Activated CD4-positive, alpha-beta memory T cell treated with anti-CD3 and anti-CD28 coated beads, Interleukin-2, amount 10 ng/mL, durations not matched to agents 7 days and 5 days (primary cell): ENCODE measurements at regions of chr11 and their contacts with region 1.

Region 1: DNA sequence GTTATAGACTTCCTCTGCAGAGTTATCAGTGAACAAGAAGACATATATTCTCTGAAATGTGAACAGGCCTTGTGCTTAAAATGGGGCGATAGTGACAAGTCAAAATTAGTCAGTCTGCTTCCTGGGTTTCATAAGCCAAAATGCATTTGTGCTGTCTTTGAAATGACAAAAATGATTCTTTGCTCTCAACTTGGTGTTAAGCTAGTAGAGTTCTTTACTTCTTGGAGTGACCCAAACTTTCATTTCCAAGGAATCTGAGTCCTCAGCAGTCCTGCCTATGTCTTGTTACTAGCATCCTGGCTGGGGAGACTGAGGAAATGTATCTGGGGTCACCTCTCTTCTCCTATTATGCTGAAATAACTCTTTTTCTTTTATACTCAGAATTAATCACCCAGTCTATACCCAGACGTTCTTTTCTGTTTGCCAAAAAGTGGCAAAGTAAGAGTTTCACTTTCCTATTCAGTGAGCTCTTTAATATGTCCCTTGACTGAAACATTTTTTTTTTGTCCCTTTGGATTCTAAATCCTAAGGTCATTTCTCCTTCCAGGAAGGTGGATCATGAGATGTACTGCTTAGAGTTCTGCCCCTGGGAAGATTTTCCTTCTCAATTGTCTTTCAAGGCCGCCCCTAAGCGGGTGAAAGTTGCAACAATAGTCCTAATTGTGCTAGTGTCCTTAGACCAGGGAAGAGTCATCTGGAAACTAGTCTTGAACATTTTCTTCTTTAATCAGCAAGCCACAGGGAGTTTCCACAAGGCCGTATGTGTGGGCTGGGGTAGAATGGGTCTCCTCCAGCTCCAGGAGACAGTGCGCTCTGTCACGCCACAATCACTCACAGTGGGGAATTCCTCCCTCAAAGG is 53.0 kb upstream of the RDX start:
- DNase-seq: peak; percentile 62
- H3K4me3 Mint-ChIP-seq: peak overlapping the region; percentile 51
- H3K27ac Mint-ChIP-seq: peak overlapping the region; percentile 97
- H3K4me1 Mint-ChIP-seq: peaks cover 62% of the 10 kb centered on the region
- H3K27me3 Mint-ChIP-seq: no peaks in the 10 kb centered on the region

Region 2: GRCh38 chr11:110242746-110243145 is 106.6 kb before region 1 on chr11:
- CTCF ChIA-PET with region 1: no interaction called
- POLR2A ChIA-PET with region 1: no interaction called
- DNase-seq: no peak
- H3K4me3 Mint-ChIP-seq: no peak overlapping the region
- H3K27ac Mint-ChIP-seq: no peak overlapping the region
- H3K4me1 Mint-ChIP-seq: peaks cover 4% of the 10 kb centered on the region
- H3K27me3 Mint-ChIP-seq: no peaks in the 10 kb centered on the region

Region 3: GRCh38 chr11:110296226-110297075 is 52.9 kb before region 1 on chr11 and contains the start of gene RDX:
- CTCF ChIA-PET with region 1: no interaction called
- POLR2A ChIA-PET with region 1: interaction called, 11 read pairs
- DNase-seq: peak; percentile 66
- H3K4me3 Mint-ChIP-seq: peak within 1 kb of the TSS; percentile 91
- H3K27ac Mint-ChIP-seq: peak within 1 kb of the TSS; percentile 77
- H3K4me1 Mint-ChIP-seq: peaks cover 45% of the 10 kb centered on the region
- H3K27me3 Mint-ChIP-seq: no peaks in the 10 kb centered on the region
- total RNA-seq, gene RDX: 53.5 to 54.4 TPM

Region 4: GRCh38 chr11:110327508-110327907 is 21.9 kb before region 1 on chr11:
- CTCF ChIA-PET with region 1: interaction called, 4 read pairs
- POLR2A ChIA-PET with region 1: interaction called, 14 read pairs
- DNase-seq: no peak
- H3K4me3 Mint-ChIP-seq: peak overlapping the region; percentile 84
- H3K27ac Mint-ChIP-seq: peak overlapping the region; percentile 90
- H3K4me1 Mint-ChIP-seq: peaks cover 42% of the 10 kb centered on the region
- H3K27me3 Mint-ChIP-seq: no peaks in the 10 kb centered on the region